ENCODE measurements at regions of chr2 and their contacts with region 1.

Region 1: GRCh38 chr2:218269899-218270720 is at the starts of genes AAMP and PNKD:
- DNase-seq: peak; percentile 100
- H3K4me3 ChIP-seq: peak within 1 kb of the TSS; percentile 94
- H3K4me3 Mint-ChIP-seq: peak within 1 kb of the TSS; percentile 85 to 95 (median 89)
- H3K27ac ChIP-seq: peak within 1 kb of the TSS; percentile 83
- H3K27ac Mint-ChIP-seq: peak within 1 kb of the TSS; percentile 74 to 99 (median 92)
- H3K4me1 ChIP-seq: peaks cover 31% of the 10 kb centered on the region
- H3K4me1 Mint-ChIP-seq: peaks cover 42 to 66% (median 50%) of the 10 kb centered on the region in 3 donors
- H3K27me3 ChIP-seq: no peaks in the 10 kb centered on the region
- H3K27me3 Mint-ChIP-seq: no peaks in the 10 kb centered on the region
- total RNA-seq, gene AAMP: 94.8 to 95.2 TPM
- total RNA-seq, gene PNKD: 26.8 to 31.6 TPM

Region 2: DNA sequence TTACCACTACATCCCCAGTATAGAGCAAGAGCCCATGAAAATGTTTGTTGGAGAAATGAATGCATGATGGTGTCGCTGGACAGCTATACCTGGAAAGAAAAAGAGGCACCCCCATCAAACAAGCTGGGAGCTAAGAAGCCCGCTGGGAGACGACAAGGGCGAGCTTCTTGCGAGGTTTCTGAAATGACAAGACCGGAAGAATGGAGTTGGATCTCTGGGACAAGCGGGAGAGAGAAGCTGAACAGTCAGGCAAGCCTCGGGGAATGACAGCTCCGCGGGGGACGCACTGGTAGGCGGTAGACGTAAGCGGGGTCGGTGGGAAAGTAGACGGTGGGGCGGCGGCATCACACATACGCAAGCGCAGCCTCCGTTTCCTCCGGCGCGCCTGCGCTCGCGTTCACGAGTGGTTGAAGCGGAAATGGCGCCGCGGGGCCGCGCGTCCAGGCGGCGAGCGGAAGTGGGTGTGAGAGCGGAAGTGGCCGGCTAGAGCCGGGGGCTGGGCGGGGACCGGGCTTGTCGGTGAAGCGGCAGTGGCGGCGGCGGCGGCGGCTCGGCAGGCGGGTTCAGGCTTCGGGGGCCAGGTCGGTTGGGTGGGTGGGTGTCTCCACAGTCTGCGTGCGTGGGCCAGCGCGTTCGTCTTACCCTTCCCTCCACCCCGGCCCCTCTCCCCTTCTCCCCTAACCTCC is 53.3 kb before region 1 on chr2 and contains the start of gene ARPC2:
- CTCF ChIA-PET with region 1: interaction called, 13 read pairs
- POLR2A ChIA-PET with region 1: interaction called, 8 read pairs
- DNase-seq: peak; percentile 93 to 97 (median 96)
- H3K4me3 ChIP-seq: peak within 1 kb of the TSS; percentile 87
- H3K4me3 Mint-ChIP-seq: peak within 1 kb of the TSS; percentile 85 to 97 (median 93)
- H3K27ac ChIP-seq: peak within 1 kb of the TSS; percentile 92
- H3K27ac Mint-ChIP-seq: peak within 1 kb of the TSS; percentile 91 to 100 (median 98)
- H3K4me1 ChIP-seq: peaks cover 34% of the 10 kb centered on the region
- H3K4me1 Mint-ChIP-seq: peaks cover 36 to 43% (median 39%) of the 10 kb centered on the region in 3 donors
- H3K27me3 ChIP-seq: no peaks in the 10 kb centered on the region
- H3K27me3 Mint-ChIP-seq: peaks cover 0 to 1% of the 10 kb centered on the region in 2 donors
- total RNA-seq, gene ARPC2: 575 to 600 TPM

Region 3: GRCh38 chr2:218286570-218287459 is 16.7 kb after region 1 on chr2:
- CTCF ChIA-PET with region 1: interaction called, 144 read pairs
- POLR2A ChIA-PET with region 1: interaction called, 41 read pairs
- DNase-seq: peak; percentile 79 to 89 (median 86)
- H3K4me3 ChIP-seq: peak overlapping the region; percentile 60
- H3K4me3 Mint-ChIP-seq: peak overlapping the region; percentile 76 to 93 (median 89)
- H3K27ac ChIP-seq: peak overlapping the region; percentile 96
- H3K27ac Mint-ChIP-seq: peak overlapping the region; percentile 97 to 100 (median 99)
- H3K4me1 ChIP-seq: peaks cover 85% of the 10 kb centered on the region
- H3K4me1 Mint-ChIP-seq: peaks cover 78 to 91% (median 82%) of the 10 kb centered on the region in 3 donors
- H3K27me3 ChIP-seq: no peaks in the 10 kb centered on the region
- H3K27me3 Mint-ChIP-seq: no peaks in the 10 kb centered on the region

Region 4: DNA sequence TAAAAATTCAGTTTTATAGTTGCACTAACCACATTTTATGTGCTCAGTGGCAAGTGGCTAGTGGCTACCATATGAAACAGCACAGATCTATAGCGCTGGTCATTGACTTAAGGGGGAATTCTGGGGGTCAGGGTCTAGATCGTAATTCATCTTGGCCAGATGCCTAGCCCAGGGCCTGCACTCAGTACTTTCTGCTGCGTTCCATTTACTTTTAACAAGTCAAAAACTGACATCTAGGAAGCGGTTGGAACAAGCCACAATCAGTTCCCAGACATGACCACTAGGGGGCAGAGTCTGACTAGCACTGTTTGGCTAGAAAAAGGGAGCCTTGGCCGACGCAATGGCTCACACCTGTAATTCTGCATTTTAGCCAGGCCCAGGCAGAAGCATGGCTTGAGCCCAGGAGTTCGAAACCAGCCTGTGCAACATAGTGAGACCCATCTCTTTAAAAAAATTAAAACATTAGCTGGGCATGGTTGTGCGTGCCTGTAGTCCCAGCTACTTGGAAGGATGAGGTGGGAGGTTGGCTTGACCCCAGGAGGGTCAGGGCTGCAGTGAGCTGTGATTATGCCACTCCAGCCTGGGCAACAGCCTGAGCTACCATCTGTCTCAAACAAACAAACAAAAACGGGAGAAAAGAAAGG is 31.2 kb after region 1 on chr2:
- CTCF ChIA-PET with region 1: interaction called, 144 read pairs
- POLR2A ChIA-PET with region 1: no interaction called
- DNase-seq: peak; percentile 77 to 91 (median 80)
- H3K4me3 ChIP-seq: no peak overlapping the region
- H3K4me3 Mint-ChIP-seq: peak overlapping the region in 1 of 7 donors; percentile 11
- H3K27ac ChIP-seq: no peak overlapping the region
- H3K27ac Mint-ChIP-seq: peak overlapping the region in 6 of 8 donors; percentile 1 to 70 (median 28)
- H3K4me1 ChIP-seq: peaks cover 6% of the 10 kb centered on the region
- H3K4me1 Mint-ChIP-seq: peaks cover 3 to 8% (median 7%) of the 10 kb centered on the region in 3 donors
- H3K27me3 ChIP-seq: no peaks in the 10 kb centered on the region
- H3K27me3 Mint-ChIP-seq: no peaks in the 10 kb centered on the region

Region 5: DNA sequence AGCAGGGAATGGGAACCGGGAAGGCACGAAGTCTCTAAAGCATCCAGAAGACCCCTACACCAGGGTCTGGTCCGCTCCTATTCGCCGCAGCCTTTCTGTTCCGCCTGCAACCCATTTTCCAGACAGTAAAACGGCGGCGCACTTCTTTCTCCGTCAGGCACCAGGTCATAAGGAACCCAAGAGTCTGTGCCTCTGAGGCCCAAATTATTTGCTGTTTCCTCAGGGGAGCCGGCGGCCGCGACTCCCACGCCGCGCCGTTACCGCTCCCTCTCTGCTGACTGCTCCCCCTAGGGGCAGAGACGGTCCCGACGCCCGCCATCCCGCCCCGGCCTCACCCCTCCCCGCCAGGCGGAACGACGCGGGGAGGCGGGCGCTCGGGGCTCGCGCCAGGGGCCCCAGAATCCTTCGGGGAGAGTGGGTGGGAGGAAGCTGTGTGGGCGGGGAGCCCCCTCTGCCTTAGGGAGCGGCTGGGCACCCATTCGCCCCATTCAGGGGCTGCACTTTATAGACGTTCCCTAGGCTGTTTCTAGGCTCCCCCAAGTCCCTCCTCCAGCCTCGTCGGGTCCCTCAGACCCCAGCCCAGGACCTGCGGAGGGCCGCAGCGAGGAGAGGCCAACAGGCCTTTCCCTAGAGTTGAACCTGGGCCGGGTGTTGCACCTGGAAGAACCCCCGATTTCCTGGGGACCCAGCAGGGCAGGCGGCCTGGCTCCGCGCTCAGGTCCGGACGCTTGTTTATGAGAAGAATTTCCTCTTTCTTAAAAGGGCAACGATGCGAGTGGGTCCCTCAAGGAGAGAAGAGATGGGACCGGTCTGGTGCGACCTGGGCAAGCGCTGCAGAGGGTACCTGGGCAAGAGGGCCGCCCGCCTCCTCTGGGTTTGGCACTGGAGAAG is 125.9 kb after region 1 on chr2:
- CTCF ChIA-PET with region 1: interaction called, 63 read pairs
- POLR2A ChIA-PET with region 1: interaction called, 17 read pairs
- DNase-seq: peak; percentile 90 to 96 (median 95)
- H3K4me3 ChIP-seq: peak overlapping the region; percentile 93
- H3K4me3 Mint-ChIP-seq: peak overlapping the region; percentile 90 to 98 (median 93)
- H3K27ac ChIP-seq: peak overlapping the region; percentile 92
- H3K27ac Mint-ChIP-seq: peak overlapping the region; percentile 91 to 100 (median 98)
- H3K4me1 ChIP-seq: peaks cover 45% of the 10 kb centered on the region
- H3K4me1 Mint-ChIP-seq: peaks cover 42 to 56% (median 46%) of the 10 kb centered on the region in 3 donors
- H3K27me3 ChIP-seq: no peaks in the 10 kb centered on the region
- H3K27me3 Mint-ChIP-seq: peaks cover 0 to 13% of the 10 kb centered on the region in 2 donors

Measured in CD8-positive, alpha-beta memory T cell (primary cell).